Posterior cingulate gyrus (tissue), 11 donors: ENCODE measurements at regions of chr10 and their contacts with region 1.

Region 1: GRCh38 chr10:91251430-91252056 is 31.1 kb downstream of the PCGF5 start:
- DNase-seq: peak in 7 of 10 donors; percentile 16 to 77 (median 60)

Region 2: GRCh38 chr10:90592638-90593302 is 658.8 kb before region 1 on chr10:
- intact Hi-C with region 1: no loop called
- DNase-seq: peak in 9 of 10 donors; percentile 12 to 90 (median 30)

Region 3: DNA sequence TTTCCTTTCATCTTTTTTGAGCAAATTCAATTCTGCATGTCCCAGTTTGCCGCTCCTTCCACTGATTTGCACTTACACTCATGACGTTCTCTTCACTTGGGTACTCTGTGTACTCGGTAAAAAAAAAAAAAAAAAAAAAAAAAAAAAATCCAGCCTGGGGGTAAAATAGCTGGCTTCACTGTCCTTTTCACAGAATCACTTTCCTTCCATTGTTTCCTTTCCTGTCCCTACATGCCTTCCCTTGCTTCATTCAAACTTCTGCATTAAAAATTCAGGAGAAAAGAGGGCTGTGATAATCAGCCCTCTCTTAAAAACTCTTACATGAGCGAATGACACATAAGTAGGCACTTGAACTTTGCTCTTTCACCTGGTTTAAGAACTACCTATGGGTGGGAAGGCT is 339.4 kb before region 1 on chr10:
- intact Hi-C with region 1: loop called (anchors 1 kb)
- DNase-seq: no peak

Region 4: GRCh38 chr10:91088300-91089140 is 163.0 kb before region 1 on chr10:
- intact Hi-C with region 1: loop called (anchors 1 kb)
- DNase-seq: no peak

Region 5: GRCh38 chr10:91163269-91163868 is 88.2 kb before region 1 on chr10:
- intact Hi-C with region 1: loop called (anchors 2 kb)
- DNase-seq: peak; percentile 37 to 94 (median 60)